K562 (cell line): ENCODE measurements at regions of chr22 and their contacts with region 1.

Region 1: GRCh38 chr22:17957693-17958092 is 66.7 kb downstream of the MICAL3 start:
- DNase-seq: no peak
- ATAC-seq: no peak
- H3K4me3 ChIP-seq: no peak overlapping the region
- H3K27ac ChIP-seq: no peak overlapping the region
- H3K4me1 ChIP-seq: peaks cover 0 to 10% of the 10 kb centered on the region in 2 experiments; a peak in 3 of 5 replicates
- H3K27me3 ChIP-seq: no peaks in the 10 kb centered on the region
- CTCF ChIP-seq: no peak
- EP300 ChIP-seq: no peak
- POLR2A ChIP-seq: no peak
- RAD21 ChIP-seq: no peak

Region 2: GRCh38 chr22:17943533-17944249 is 14.0 kb before region 1 on chr22:
- CTCF ChIA-PET with region 1: no interaction called
- POLR2A ChIA-PET with region 1: interaction called, 14 read pairs
- in situ Hi-C with region 1: no loop called
- intact Hi-C with region 1: no loop called
- DNase-seq: no peak
- ATAC-seq: no peak
- H3K4me3 ChIP-seq: no peak overlapping the region
- H3K27ac ChIP-seq: no peak overlapping the region
- H3K4me1 ChIP-seq: peaks cover 0 to 10% of the 10 kb centered on the region in 2 experiments; a peak in 4 of 5 replicates
- H3K27me3 ChIP-seq: no peaks in the 10 kb centered on the region
- CTCF ChIP-seq: no peak
- EP300 ChIP-seq: no peak
- POLR2A ChIP-seq: no peak
- RAD21 ChIP-seq: no peak